SK-N-SH (cell line): ENCODE measurements at regions of chr11 and their contacts with region 1.

Region 1: GRCh38 chr11:69918938-69919650 is 99.9 kb upstream of the FGF3 start:
- DNase-seq: peak; percentile 89
- H3K4me3 ChIP-seq: peak overlapping the region in 1 of 2 experiments; percentile 54; a peak in 1 of 4 replicates
- H3K27ac ChIP-seq: no peak overlapping the region
- H3K4me1 ChIP-seq: peaks cover 0 to 10% of the 10 kb centered on the region in 2 experiments; a peak in 1 of 4 replicates
- H3K27me3 ChIP-seq: no peaks in the 10 kb centered on the region
- CTCF ChIP-seq: peak; percentile 89
- EP300 ChIP-seq: no peak
- RAD21 ChIP-seq: peak; percentile 80

Region 2: GRCh38 chr11:69501891-69502850 is 416.9 kb before region 1 on chr11:
- CTCF ChIA-PET with region 1: no interaction called
- POLR2A ChIA-PET with region 1: no interaction called
- DNase-seq: peak; percentile 40
- H3K4me3 ChIP-seq: no peak overlapping the region
- H3K27ac ChIP-seq: no peak overlapping the region
- H3K4me1 ChIP-seq: peaks cover 2 to 5% of the 10 kb centered on the region in 2 experiments; a peak in 3 of 4 replicates
- H3K27me3 ChIP-seq: no peaks in the 10 kb centered on the region
- CTCF ChIP-seq: no peak
- EP300 ChIP-seq: no peak
- RAD21 ChIP-seq: no peak

Region 3: GRCh38 chr11:69540118-69540502 is 379.0 kb before region 1 on chr11:
- CTCF ChIA-PET with region 1: no interaction called
- POLR2A ChIA-PET with region 1: no interaction called
- DNase-seq: peak; percentile 69
- H3K4me3 ChIP-seq: no peak overlapping the region
- H3K27ac ChIP-seq: no peak overlapping the region; a peak in 1 of 4 replicates
- H3K4me1 ChIP-seq: peaks cover 11 to 15% of the 10 kb centered on the region in 2 experiments; a peak in 2 of 4 replicates
- H3K27me3 ChIP-seq: no peaks in the 10 kb centered on the region
- CTCF ChIP-seq: no peak
- EP300 ChIP-seq: no peak
- RAD21 ChIP-seq: no peak

Region 4: DNA sequence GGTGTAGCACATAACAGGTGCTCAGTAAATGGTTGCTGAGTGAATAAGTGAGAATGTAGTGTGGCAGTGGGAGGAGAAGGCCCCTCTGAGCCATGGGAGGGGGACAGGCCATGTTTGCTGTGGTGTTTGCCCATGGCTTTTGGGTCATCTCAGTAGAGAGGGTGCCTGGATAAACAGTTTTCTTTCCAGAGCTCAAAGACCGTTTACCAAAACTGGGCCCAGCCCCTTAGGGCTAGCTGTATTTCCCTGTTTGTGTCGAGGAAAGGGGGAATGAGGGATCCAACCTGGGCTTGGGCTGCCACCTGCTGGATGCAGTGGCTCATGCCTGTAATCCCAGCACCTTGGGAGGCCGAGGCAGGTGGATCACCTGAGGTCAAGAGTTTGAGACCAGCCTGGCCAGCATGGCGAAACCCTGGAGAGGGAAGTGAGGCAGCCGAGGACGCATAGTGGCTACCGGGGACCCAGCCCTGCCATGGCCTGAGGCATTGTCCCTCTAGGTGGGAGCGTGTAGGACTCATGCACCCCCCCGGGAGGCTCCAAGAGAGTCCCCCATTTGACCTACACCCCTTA is 235.2 kb before region 1 on chr11:
- CTCF ChIA-PET with region 1: interaction called, 15 read pairs
- POLR2A ChIA-PET with region 1: no interaction called
- DNase-seq: no peak
- H3K4me3 ChIP-seq: no peak overlapping the region
- H3K27ac ChIP-seq: no peak overlapping the region
- H3K4me1 ChIP-seq: no peaks in the 10 kb centered on the region; a peak in 1 of 4 replicates
- H3K27me3 ChIP-seq: no peaks in the 10 kb centered on the region
- CTCF ChIP-seq: peak; percentile 47
- EP300 ChIP-seq: no peak
- RAD21 ChIP-seq: peak; percentile 59

Region 5: DNA sequence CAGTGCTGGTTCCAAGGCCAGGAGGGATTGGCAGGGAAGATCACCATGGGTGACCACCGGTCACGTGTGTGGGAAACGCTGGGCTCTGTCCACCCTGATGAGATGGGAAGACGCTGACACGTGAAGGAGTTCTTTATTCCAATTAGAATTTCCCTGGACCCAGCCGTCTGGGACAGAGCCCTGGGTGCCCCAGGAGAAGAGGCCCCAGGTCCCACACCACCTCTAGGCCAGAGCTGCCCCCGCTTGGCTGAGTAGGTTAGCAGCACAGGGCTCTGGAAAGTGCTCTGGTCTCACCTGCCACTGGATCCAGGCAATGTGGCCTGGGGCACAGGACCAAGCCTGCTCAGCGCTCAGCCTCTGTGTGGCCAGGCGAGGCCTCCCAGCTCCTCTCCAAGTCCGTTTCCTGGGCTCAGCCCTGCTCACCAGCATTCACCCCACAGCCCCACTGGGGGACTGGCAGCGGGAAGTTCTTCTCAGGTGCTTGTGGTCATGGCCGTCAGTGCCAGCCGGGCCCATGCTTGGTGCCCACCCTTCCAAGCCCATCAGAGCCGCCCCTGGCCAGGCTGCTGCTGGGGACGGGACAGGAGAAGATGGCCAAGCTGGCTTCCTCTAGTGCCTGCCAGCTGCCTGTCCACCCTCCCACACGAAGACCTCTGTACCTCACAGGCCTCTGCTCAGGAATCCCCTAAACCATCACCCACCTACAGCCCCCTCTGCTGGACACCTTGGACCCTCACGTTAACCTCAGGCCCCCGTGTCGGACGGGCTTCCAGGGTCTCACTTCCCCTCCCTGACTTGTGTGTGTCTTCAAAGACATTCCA is 37.4 kb before region 1 on chr11:
- CTCF ChIA-PET with region 1: interaction called, 249 read pairs
- POLR2A ChIA-PET with region 1: no interaction called
- DNase-seq: no peak
- H3K4me3 ChIP-seq: no peak overlapping the region
- H3K27ac ChIP-seq: no peak overlapping the region
- H3K4me1 ChIP-seq: peaks cover 0 to 9% of the 10 kb centered on the region in 2 experiments; a peak in 1 of 4 replicates
- H3K27me3 ChIP-seq: no peaks in the 10 kb centered on the region
- CTCF ChIP-seq: no peak; the same call in 1 of the 2 replicates
- EP300 ChIP-seq: no peak
- RAD21 ChIP-seq: no peak

Region 6: GRCh38 chr11:70080763-70081162 is 161.7 kb after region 1 on chr11:
- CTCF ChIA-PET with region 1: interaction called, 10 read pairs
- POLR2A ChIA-PET with region 1: interaction called, 3 read pairs
- DNase-seq: no peak
- H3K4me3 ChIP-seq: no peak overlapping the region
- H3K27ac ChIP-seq: no peak overlapping the region
- H3K4me1 ChIP-seq: peaks cover 0 to 6% of the 10 kb centered on the region in 2 experiments; a peak in 1 of 4 replicates
- H3K27me3 ChIP-seq: peaks cover 8% of the 10 kb centered on the region; the same call in 1 of the 2 replicates
- CTCF ChIP-seq: no peak
- EP300 ChIP-seq: no peak
- RAD21 ChIP-seq: no peak

Region 7: DNA sequence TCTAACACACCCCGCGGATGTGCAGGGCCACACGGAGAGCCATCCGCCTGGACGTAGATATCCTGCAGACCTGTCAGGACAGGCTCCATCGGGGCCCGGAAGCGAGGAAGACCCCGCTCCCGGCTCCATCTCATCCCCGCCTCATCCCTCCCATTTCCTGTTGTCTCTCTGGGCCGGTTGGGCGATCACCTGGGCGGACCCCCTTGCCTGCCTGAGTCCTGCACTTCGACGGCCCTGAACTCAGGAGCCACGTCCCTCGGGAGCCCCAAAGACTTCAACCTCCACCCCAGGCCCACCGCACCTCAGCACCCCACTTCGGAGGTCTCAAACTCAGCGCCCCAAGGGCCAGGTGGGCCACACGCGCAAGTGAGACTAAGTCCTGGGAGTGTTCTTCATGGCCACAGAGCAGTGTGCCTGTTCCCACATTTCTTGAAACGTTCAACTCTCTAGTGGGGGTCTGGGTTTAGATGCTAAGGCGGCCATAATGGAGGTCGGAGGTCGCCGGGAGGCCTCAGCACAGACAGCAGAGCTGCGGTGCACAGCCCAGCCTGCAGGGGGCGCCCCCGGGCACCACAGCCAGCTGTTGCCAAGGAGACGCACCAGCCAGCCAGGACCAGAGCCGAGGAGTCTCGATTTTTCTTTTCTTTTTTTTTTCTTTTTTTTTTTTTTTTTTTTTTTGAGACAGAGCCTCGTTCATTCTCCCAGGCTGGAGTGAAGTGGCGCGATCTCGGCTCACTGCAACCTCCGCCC is 258.0 kb after region 1 on chr11:
- CTCF ChIA-PET with region 1: interaction called, 11 read pairs
- POLR2A ChIA-PET with region 1: no interaction called
- DNase-seq: peak; percentile 81
- H3K4me3 ChIP-seq: no peak overlapping the region; a peak in 1 of 4 replicates
- H3K27ac ChIP-seq: no peak overlapping the region
- H3K4me1 ChIP-seq: no peaks in the 10 kb centered on the region
- H3K27me3 ChIP-seq: no peaks in the 10 kb centered on the region; the same call in 1 of the 2 replicates
- CTCF ChIP-seq: peak; percentile 55
- EP300 ChIP-seq: no peak
- RAD21 ChIP-seq: no peak

Region 8: DNA sequence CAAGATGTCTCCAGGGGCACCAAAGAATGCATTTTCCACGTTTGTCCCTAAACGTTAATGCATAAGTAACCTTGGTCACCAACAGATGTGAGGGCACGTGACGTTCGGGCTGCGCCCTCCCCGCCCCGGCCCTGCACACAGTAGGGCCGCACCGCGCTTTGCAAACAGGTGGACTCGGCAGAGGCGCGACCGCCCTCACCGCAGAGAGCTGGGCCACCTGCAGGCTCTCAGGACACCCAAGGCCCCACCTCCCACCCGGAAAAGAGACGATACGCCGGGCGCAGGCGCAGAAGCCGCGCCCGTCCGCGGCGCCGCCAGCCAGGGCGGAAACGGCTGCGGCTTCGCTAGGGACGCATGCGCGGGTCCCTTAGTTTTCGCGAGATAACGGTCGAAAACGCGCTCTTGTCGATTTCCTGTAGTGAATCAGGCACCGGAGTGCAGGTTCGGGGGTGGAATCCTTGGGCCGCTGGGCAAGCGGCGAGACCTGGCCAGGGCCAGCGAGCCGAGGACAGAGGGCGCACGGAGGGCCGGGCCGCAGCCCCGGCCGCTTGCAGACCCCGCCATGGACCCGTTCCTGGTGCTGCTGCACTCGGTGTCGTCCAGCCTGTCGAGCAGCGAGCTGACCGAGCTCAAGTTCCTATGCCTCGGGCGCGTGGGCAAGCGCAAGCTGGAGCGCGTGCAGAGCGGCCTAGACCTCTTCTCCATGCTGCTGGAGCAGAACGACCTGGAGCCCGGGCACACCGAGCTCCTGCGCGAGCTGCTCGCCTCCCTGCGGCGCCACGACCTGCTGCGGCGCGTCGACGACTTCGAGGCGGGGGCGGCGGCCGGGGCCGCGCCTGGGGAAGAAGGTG is 284.0 kb after region 1 on chr11 and contains the start of gene FADD:
- CTCF ChIA-PET with region 1: interaction called, 105 read pairs
- POLR2A ChIA-PET with region 1: no interaction called
- DNase-seq: peak; percentile 97
- H3K4me3 ChIP-seq: peak within 1 kb of the TSS; percentile 88 to 96
- H3K27ac ChIP-seq: peak within 1 kb of the TSS; percentile 83 to 84
- H3K4me1 ChIP-seq: peaks cover 6 to 16% of the 10 kb centered on the region in 2 experiments; a peak in 2 of 4 replicates
- H3K27me3 ChIP-seq: no peaks in the 10 kb centered on the region
- CTCF ChIP-seq: no peak
- EP300 ChIP-seq: no peak
- RAD21 ChIP-seq: no peak
- polyA plus RNA-seq, gene FADD: 23.8 and 28.3 TPM in 2 replicates